RWPE1 (cell line): ENCODE measurements at regions of chr1 and their contacts with region 1.

Region 1: DNA sequence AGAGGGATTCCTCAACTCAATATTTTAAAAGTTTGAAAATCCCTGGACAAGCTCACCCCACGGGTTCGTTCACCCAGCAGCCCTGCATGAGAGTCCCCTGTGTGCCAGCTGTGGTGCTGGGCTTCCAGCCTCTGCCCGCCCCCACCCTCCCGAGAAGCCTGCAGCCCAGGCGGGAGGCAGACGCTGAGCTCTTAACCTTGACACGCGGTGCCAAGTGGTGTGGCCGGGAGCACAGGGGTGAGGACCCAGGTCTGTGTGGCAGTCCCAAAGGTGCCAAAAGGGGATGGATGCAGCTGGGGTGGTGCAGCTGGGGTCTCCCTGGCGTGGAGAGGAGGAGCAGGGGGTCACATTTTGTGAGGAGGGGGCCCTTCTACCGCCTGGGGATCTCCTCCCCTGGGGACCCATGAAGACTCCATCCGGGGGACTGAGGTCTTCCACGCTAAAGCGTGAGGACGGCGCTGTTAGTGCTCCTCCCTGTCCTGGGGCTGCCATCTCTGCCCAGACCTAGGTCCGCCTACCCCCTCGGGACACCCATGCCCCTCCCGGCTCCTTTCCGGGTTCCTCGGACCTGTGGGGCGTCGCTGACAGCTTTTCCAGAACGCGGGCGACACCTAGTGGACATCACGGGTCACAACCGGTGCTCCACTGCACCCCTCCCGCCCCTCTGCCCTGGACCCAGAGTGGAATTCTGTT is 12.9 kb downstream of the PLA2G2F start:
- DNase-seq: peak; percentile 82
- H3K27ac ChIP-seq: no peak overlapping the region
- CTCF ChIP-seq: peak; percentile 88

Region 2: GRCh38 chr1:19918057-19918456 is 234.0 kb before region 1 on chr1:
- CTCF ChIA-PET with region 1: interaction called, 34 read pairs
- POLR2A ChIA-PET with region 1: no interaction called
- DNase-seq: peak; percentile 80
- H3K27ac ChIP-seq: no peak overlapping the region
- CTCF ChIP-seq: peak; percentile 84

Region 3: GRCh38 chr1:20095564-20096434 is 56.3 kb before region 1 on chr1:
- CTCF ChIA-PET with region 1: interaction called, 13 read pairs
- POLR2A ChIA-PET with region 1: no interaction called
- DNase-seq: no peak
- H3K27ac ChIP-seq: no peak overlapping the region
- CTCF ChIP-seq: no peak

Region 4: GRCh38 chr1:20102875-20103274 is 49.2 kb before region 1 on chr1:
- CTCF ChIA-PET with region 1: interaction called, 14 read pairs
- POLR2A ChIA-PET with region 1: no interaction called
- DNase-seq: peak; percentile 33
- H3K27ac ChIP-seq: no peak overlapping the region
- CTCF ChIP-seq: no peak